Calu3 (cell line): ENCODE measurements at regions of chr1 and their contacts with region 1.

Region 1: GRCh38 chr1:97524211-97524610 is 396.6 kb downstream of the DPYD start:
- DNase-seq: no peak
- H3K4me3 Mint-ChIP-seq: no peak overlapping the region
- H3K27ac Mint-ChIP-seq: no peak overlapping the region
- H3K4me1 Mint-ChIP-seq: peaks cover 20% of the 10 kb centered on the region
- H3K27me3 Mint-ChIP-seq: no peaks in the 10 kb centered on the region
- CTCF ChIP-seq: no peak

Region 2: DNA sequence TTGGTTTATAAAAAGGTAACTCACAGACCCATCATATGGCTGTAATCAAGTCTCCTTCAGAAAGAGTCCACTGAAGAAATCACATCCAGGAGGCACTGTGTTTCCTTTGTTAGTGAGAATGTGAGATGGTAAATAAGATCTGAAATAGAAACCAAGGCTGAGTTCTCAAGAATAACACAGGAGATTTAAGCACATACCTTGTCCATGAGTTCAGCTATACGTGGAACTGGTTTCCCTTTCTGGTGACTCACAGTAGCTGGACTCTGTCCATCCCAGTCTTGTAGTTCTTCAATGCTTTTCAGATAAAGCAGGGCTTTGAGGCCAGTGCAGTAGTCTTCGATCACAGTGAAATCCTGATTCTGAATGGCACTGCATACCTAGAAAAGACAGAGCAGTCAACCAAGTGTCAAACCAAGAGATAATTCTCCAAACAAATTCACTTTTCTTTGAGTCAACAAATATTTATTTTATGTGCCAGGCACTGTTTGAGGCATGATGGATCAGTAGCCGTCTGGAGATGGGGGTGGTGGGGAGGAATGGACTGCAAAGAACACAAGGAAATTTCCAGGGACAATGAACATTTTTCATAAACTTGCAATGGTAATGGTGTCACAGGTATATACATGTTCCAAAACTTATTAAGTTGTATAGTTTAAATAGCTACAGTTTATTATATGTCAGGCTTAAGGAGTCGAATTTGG is 331.2 kb before region 1 on chr1:
- CTCF ChIA-PET with region 1: interaction called, 11 read pairs
- intact Hi-C with region 1: loop called (anchors 5 kb)
- DNase-seq: peak; percentile 50
- H3K4me3 Mint-ChIP-seq: peak overlapping the region; percentile 12
- H3K27ac Mint-ChIP-seq: peak overlapping the region; percentile 56
- H3K4me1 Mint-ChIP-seq: peaks cover 18% of the 10 kb centered on the region
- H3K27me3 Mint-ChIP-seq: no peaks in the 10 kb centered on the region
- CTCF ChIP-seq: no peak

Region 3: DNA sequence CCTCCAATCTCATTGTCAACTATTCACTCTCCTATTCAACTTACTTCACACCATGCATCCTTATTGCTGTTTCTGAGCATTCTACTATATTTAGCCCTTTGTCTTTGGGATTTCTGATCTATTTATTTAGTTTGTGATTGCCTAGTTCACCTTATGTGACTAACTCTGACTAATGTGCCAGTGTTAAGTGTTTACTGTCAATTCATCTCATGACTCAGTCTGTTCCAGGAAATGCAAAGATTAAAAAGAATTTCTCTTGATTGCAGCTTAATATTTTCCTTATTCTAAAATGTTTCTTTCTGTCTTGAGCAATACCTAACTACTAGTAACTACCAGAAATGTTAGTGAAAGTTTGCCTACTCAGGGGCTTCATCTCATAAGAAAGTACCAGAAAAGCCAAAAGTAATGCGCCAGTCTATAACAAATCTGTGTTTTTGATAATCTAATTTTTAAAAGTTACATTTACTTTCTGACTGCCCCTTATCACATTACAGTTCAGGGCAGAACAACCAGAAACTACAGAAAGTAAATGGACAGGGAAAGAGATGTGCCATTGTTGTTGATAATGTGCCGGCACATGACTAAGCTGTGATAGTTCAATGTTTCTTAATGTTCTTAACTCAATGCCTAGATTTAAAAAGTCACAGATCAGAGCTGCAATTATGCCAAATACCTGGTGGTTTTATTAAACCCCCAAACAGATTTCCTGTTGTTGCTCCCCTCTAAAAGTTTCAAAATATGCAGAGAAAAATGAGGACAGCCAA is 246.1 kb before region 1 on chr1:
- CTCF ChIA-PET with region 1: interaction called, 5 read pairs
- intact Hi-C with region 1: loop called (anchors 10 kb)
- DNase-seq: no peak
- H3K4me3 Mint-ChIP-seq: peak overlapping the region; percentile 9
- H3K27ac Mint-ChIP-seq: peak overlapping the region; percentile 96
- H3K4me1 Mint-ChIP-seq: peaks cover 45% of the 10 kb centered on the region
- H3K27me3 Mint-ChIP-seq: no peaks in the 10 kb centered on the region
- CTCF ChIP-seq: no peak